K562 (cell line): ENCODE measurements at regions of chr12 and their contacts with region 1.

Region 1: DNA sequence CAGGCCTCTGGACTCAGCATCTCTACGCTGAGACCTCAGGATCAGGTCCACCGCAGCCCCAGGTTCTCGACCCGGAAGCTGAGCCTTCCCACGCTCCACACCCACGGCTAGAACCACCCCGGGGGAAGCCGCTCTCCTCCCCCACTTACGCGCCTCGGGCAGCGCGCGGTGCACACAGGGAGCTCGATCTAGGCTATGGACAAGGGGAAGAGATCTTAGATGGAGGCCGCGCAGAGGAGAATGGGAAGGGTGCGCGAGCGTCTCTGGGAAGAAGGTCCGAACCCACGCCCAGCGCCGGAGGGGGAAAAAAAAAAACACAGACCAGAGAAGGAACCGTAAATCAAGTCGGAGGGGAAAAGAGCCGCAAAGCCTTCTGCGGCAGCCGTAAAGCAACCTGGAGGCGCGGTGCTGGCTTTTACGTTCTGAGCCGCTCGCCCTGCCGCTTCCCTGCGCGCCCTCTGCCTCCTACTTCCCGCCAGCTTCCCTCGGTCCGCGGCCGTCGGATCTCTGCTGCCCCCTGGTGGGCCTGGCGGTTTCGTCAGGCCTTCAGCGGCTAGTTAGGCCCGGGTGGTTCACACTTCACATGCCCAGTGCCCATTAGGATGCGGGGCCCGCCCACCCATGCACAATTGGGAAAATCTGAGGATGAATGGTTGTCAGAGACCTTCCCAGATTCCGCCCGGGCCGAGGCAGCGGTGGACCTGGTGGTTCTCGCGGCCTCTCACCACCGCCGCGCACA is at the start of gene RAD52:
- DNase-seq: peak; percentile 82 to 95 (median 85)
- ATAC-seq: peak; percentile 98
- H3K4me3 ChIP-seq: peak within 1 kb of the TSS; percentile 86
- H3K27ac ChIP-seq: peak within 1 kb of the TSS; percentile 88
- H3K4me1 ChIP-seq: peaks cover 2 to 8% of the 10 kb centered on the region in 2 experiments; a peak in 4 of 5 replicates
- H3K27me3 ChIP-seq: no peaks in the 10 kb centered on the region
- CTCF ChIP-seq: peak; percentile 79 to 95 (median 83)
- EP300 ChIP-seq: peak; percentile 20
- POLR2A ChIP-seq: peak; percentile 88
- RAD21 ChIP-seq: peak; percentile 69 to 78
- polyA plus RNA-seq, gene RAD52: 1.3 to 1.6 TPM

Region 2: DNA sequence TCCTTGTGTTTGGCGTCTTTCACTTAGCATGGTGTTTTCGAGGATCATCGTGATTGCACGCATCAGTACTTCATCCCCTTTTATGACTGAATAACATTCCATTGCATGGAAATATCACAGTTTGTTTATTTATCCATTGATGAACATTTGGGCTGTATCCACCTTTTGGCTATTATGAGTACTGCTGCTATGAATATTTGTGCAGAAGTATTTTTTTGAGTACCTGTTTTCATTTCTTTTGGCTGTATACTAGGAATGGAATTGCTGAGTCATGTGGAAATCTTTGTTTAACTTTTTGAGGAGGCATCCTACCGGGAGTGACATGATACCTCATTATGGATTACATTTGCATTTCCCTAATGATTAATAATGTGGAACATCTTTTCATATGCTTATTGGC is 130.9 kb before region 1 on chr12:
- CTCF ChIA-PET with region 1: interaction called, 3 read pairs
- POLR2A ChIA-PET with region 1: no interaction called
- in situ Hi-C with region 1: no loop called
- intact Hi-C with region 1: loop called (anchors 5 kb)
- DNase-seq: no peak
- ATAC-seq: no peak
- H3K4me3 ChIP-seq: no peak overlapping the region
- H3K27ac ChIP-seq: no peak overlapping the region
- H3K4me1 ChIP-seq: no peaks in the 10 kb centered on the region; a peak in 2 of 5 replicates
- H3K27me3 ChIP-seq: no peaks in the 10 kb centered on the region
- CTCF ChIP-seq: no peak
- EP300 ChIP-seq: no peak
- POLR2A ChIP-seq: no peak
- RAD21 ChIP-seq: no peak

Region 3: GRCh38 chr12:913919-914708 is 35.5 kb before region 1 on chr12:
- CTCF ChIA-PET with region 1: no interaction called
- POLR2A ChIA-PET with region 1: interaction called, 5 read pairs
- in situ Hi-C with region 1: no loop called
- intact Hi-C with region 1: loop called (anchors 5 kb)
- DNase-seq: no peak
- ATAC-seq: no peak
- H3K4me3 ChIP-seq: no peak overlapping the region
- H3K27ac ChIP-seq: no peak overlapping the region
- H3K4me1 ChIP-seq: peaks cover 13 to 23% of the 10 kb centered on the region in 2 experiments; a peak in 4 of 5 replicates
- H3K27me3 ChIP-seq: no peaks in the 10 kb centered on the region
- CTCF ChIP-seq: no peak
- EP300 ChIP-seq: no peak
- POLR2A ChIP-seq: no peak
- RAD21 ChIP-seq: no peak

Region 4: GRCh38 chr12:1093166-1093751 is 143.6 kb after region 1 on chr12:
- CTCF ChIA-PET with region 1: interaction called, 4 read pairs
- POLR2A ChIA-PET with region 1: interaction called, 3 read pairs
- in situ Hi-C with region 1: no loop called
- intact Hi-C with region 1: loop called (anchors 5 kb)
- DNase-seq: peak in 3 of 4 experiments; percentile 12 to 57 (median 16)
- ATAC-seq: peak; percentile 75
- H3K4me3 ChIP-seq: no peak overlapping the region
- H3K27ac ChIP-seq: no peak overlapping the region
- H3K4me1 ChIP-seq: no peaks in the 10 kb centered on the region
- H3K27me3 ChIP-seq: no peaks in the 10 kb centered on the region
- CTCF ChIP-seq: peak; percentile 46 to 66 (median 56); a peak in 5 of 6 replicates
- EP300 ChIP-seq: no peak
- POLR2A ChIP-seq: no peak
- RAD21 ChIP-seq: peak; percentile 59 to 62